ENCODE measurements at regions of chr4 and their contacts with region 1.

Region 1: DNA sequence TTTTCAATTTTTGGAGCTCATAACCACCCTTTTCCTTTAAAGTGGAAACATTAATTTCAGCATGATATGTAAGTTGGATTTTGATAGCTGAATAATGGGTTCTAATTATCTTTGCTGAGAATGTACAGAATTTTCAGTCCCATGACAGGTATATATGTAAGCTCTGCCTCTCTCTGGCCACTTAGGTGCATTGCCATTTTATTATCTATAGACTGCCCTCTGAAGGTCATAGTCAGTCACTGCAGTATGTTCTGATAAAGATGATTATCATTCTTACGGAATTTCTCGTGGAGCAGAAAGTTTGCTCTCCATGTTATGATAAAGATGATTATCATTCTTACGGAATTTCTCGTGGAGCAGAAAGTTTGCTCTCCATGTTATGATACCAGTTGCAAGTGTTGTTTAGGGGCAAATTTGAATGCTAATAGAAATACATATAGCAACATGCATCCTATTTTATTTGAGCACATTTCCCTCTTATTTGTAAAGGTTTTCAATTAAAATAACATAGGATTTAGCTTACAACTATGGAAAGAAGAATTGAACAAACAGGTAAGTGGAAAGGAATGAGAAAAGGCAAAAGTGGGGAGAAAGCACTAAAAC is 10.4 kb downstream of the AFP start:
- DNase-seq: no peak
- ATAC-seq: peak; percentile 83
- H3K4me3 Mint-ChIP-seq: no peak overlapping the region
- H3K27ac Mint-ChIP-seq: no peak overlapping the region
- H3K4me1 Mint-ChIP-seq: no peaks in the 10 kb centered on the region
- H3K27me3 Mint-ChIP-seq: peaks cover 14% of the 10 kb centered on the region

Region 2: DNA sequence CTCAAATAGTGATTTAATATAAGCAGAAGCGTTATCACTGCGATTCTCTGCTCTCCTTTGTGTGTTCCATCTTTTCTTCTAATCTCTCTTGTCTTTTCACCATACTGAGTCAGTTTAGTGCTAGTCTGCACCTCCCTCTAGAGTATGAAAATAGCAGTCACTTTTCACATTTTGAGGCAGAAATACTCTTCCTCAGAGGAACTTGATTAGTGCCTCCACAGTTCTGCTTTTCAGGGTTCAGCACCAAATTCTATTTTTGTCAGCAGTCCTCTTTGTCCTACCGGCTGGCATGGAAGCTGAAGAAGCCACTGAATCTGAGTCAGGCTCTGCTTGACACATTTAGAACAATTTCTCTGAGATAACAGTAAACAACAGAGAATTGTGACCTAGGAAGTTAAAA is 138.2 kb before region 1 on chr4:
- CTCF ChIA-PET with region 1: interaction called, 25 read pairs
- POLR2A ChIA-PET with region 1: no interaction called
- intact Hi-C with region 1: loop called (anchors 1 kb)
- DNase-seq: no peak
- ATAC-seq: no peak
- H3K4me3 Mint-ChIP-seq: no peak overlapping the region
- H3K27ac Mint-ChIP-seq: no peak overlapping the region
- H3K4me1 Mint-ChIP-seq: no peaks in the 10 kb centered on the region
- H3K27me3 Mint-ChIP-seq: no peaks in the 10 kb centered on the region

Region 3: DNA sequence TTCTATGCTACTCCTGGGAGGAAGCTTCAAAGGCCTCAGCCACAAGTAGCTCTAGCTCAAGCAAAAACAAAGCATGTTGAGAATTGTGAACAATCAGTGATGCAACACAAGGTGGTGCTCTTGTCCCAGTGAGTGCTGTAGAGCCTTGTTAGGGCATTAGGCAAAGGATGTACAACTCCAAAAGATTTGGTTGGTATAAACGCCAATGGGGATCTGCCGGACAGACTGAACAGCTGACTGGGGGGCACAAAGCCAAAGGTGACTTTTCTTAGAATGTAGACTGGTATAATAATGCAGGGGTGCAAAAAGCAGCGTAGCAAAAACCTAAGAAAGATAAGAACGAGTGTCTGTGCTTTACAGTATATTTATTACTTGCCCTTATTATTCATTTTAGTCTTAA is 105.0 kb before region 1 on chr4:
- CTCF ChIA-PET with region 1: interaction called, 22 read pairs
- POLR2A ChIA-PET with region 1: no interaction called
- intact Hi-C with region 1: loop called (anchors 2 to 10 kb)
- DNase-seq: peak; percentile 37
- ATAC-seq: no peak
- H3K4me3 Mint-ChIP-seq: no peak overlapping the region
- H3K27ac Mint-ChIP-seq: no peak overlapping the region
- H3K4me1 Mint-ChIP-seq: no peaks in the 10 kb centered on the region
- H3K27me3 Mint-ChIP-seq: peaks cover 2% of the 10 kb centered on the region

Region 4: GRCh38 chr4:73477176-73477575 is 30.7 kb after region 1 on chr4:
- CTCF ChIA-PET with region 1: no interaction called
- POLR2A ChIA-PET with region 1: no interaction called
- intact Hi-C with region 1: no loop called
- DNase-seq: no peak
- ATAC-seq: no peak
- H3K4me3 Mint-ChIP-seq: no peak overlapping the region
- H3K27ac Mint-ChIP-seq: no peak overlapping the region
- H3K4me1 Mint-ChIP-seq: no peaks in the 10 kb centered on the region
- H3K27me3 Mint-ChIP-seq: peaks cover 7% of the 10 kb centered on the region

Region 5: GRCh38 chr4:73606465-73606974 is 160.1 kb after region 1 on chr4:
- CTCF ChIA-PET with region 1: no interaction called
- POLR2A ChIA-PET with region 1: no interaction called
- intact Hi-C with region 1: no loop called
- DNase-seq: no peak
- ATAC-seq: no peak
- H3K4me3 Mint-ChIP-seq: no peak overlapping the region
- H3K27ac Mint-ChIP-seq: no peak overlapping the region
- H3K4me1 Mint-ChIP-seq: peaks cover 20% of the 10 kb centered on the region
- H3K27me3 Mint-ChIP-seq: peaks cover 2% of the 10 kb centered on the region

Region 6: DNA sequence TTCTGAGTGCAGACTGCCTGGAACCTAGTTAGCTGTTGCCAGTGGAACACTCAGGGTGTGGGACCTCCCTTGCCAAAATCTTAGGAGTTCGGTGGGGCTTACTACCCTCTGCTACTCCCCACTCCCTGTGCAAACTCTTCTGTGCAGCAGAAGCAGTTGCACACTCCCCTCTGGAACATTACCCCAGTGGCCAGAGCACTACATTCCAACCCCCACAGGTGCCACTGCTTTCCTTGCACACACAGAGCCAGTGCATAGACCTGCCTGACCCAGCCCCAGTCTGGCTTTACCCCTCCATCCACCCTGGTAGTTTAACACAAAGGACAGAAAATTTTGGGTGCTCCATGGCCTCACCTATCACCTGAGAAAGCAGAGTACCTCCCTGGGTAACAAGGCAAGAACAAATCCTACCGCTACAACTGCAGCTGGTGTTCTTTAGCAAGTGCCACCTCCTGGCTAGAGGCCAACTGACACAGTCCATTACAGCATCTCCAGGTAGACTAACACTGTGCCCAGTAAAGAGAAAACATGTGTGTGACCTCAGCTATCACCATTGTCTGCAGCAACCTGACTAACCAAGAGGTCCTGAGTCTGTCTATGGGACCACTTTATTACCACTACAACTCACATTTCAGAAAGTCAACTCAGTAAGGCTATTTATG is 185.3 kb after region 1 on chr4:
- CTCF ChIA-PET with region 1: no interaction called
- POLR2A ChIA-PET with region 1: no interaction called
- intact Hi-C with region 1: no loop called
- DNase-seq: no peak
- ATAC-seq: no peak
- H3K4me3 Mint-ChIP-seq: no peak overlapping the region
- H3K27ac Mint-ChIP-seq: no peak overlapping the region
- H3K4me1 Mint-ChIP-seq: no peaks in the 10 kb centered on the region
- H3K27me3 Mint-ChIP-seq: peaks cover 5% of the 10 kb centered on the region